ENCODE measurements at regions of chr1 and their contacts with region 1.

Region 1: GRCh38 chr1:2141036-2141435 is 53.5 kb downstream of the FAAP20 start:
- DNase-seq: no peak
- ATAC-seq: no peak
- H3K4me3 ChIP-seq: no peak overlapping the region
- H3K4me3 Mint-ChIP-seq: no peak overlapping the region
- H3K27ac ChIP-seq: no peak overlapping the region
- H3K27ac Mint-ChIP-seq: no peak overlapping the region
- H3K4me1 ChIP-seq: peaks cover 24% of the 10 kb centered on the region
- H3K4me1 Mint-ChIP-seq: peaks cover 38% of the 10 kb centered on the region
- H3K27me3 ChIP-seq: no peaks in the 10 kb centered on the region
- H3K27me3 Mint-ChIP-seq: no peaks in the 10 kb centered on the region
- CTCF ChIP-seq: no peak

Region 2: DNA sequence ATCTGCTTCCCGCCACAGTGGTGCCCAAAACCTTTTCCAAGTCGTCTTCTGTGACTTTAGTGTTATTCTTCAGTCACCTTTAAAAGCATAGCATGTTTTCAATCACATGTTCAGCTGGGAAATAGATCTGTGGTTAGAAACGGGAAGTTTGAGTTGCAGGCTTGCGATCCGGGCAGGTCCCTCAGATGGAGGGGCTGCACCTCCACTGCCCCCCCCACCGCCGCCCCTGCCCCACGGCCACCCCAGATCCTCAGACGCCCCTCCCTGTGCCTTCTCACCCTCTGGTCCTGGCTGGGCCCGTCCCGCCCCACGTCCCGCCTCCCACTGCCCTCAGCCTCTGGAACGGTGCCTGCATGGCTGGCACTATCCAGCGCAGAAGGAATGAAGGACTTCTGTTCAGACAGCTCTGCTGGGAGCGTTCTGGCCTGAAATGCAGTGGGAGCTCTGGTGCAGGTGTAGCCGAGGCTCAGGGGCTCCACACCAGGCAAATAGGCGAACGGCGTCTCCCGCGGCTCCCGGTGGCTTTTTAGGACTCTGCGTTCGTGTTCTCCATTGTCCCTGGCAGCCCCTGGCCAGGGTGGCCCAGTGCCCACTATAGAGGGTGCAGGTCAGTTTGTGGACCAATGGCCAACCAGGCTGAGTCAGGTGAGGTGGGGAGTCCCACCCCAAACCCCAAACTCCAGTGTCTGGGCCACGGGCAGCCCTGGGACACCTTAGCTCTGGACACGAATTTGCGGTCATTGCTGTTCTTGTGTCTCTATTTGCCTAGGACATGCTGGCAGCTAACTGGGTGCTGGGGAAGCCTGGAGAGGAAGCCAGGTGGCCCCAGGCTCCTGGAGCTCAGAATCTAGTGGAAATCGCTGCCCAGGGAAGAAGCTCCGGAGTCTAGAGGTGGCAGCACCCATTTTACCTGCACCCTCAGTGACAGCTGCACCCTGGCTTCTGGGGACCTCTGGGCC is 13.6 kb before region 1 on chr1:
- CTCF ChIA-PET with region 1: interaction called, 10 read pairs
- POLR2A ChIA-PET with region 1: no interaction called
- intact Hi-C with region 1: loop called in 1 of 2 experiments (anchors 2 kb)
- DNase-seq: no peak
- ATAC-seq: peak; percentile 26
- H3K4me3 ChIP-seq: no peak overlapping the region
- H3K4me3 Mint-ChIP-seq: peak overlapping the region; percentile 79
- H3K27ac ChIP-seq: no peak overlapping the region
- H3K27ac Mint-ChIP-seq: peak overlapping the region; percentile 88
- H3K4me1 ChIP-seq: peaks cover 26% of the 10 kb centered on the region
- H3K4me1 Mint-ChIP-seq: peaks cover 21% of the 10 kb centered on the region
- H3K27me3 ChIP-seq: no peaks in the 10 kb centered on the region
- H3K27me3 Mint-ChIP-seq: no peaks in the 10 kb centered on the region
- CTCF ChIP-seq: no peak

Region 3: DNA sequence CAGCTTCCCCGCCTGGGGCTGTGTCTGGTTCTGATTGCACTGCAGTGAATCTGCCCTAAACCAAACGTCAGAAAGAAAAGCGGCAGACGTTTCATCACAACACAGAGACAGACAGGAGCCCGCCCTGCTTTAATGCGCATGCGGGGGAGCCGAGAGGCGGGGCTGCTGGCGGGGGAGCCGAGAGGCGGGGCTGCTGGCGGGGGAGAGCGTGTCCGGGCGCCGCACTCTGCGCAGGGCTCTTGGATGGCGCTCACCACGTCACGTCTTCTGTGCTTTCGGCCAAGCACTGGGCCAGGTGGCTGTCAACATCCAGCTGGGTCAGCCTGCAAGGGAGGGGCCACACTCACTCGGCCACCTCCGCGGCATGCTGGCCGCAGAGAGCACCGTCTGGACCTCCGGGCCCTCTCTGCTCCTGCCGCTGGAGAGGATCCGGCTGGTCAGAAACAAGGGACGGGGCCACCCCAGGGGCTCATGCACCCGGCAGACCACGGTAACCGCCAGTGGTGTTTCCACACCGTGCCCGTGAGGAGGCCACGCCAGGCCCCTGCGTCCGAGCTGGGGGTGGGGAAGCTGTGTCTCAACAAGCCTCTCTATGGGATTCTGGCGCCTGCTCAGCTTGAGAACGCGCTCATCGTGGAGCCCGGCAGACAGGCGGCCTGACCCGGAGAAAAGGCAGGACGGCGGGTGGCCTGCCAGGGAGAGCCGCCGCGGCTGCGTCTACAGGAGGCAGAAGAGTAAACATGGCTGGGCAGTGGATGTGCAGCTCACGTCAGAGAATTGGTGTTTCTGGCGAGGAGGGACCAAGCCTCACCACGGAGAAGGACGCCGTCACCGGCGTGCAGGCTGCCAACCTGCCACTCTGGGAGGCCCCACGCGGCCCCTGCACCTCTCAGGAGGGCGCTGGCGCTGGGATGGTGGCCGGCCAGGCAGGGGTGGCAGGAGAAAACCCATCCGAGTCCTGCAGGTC is 48.7 kb after region 1 on chr1:
- CTCF ChIA-PET with region 1: interaction called, 11 read pairs
- POLR2A ChIA-PET with region 1: no interaction called
- intact Hi-C with region 1: no loop called
- DNase-seq: peak; percentile 83 to 94 (median 90)
- ATAC-seq: peak; percentile 93
- H3K4me3 ChIP-seq: peak overlapping the region; percentile 54 to 61
- H3K4me3 Mint-ChIP-seq: peak overlapping the region; percentile 80
- H3K27ac ChIP-seq: peak overlapping the region; percentile 70 to 77
- H3K27ac Mint-ChIP-seq: peak overlapping the region; percentile 98
- H3K4me1 ChIP-seq: peaks cover 16% of the 10 kb centered on the region
- H3K4me1 Mint-ChIP-seq: peaks cover 17% of the 10 kb centered on the region
- H3K27me3 ChIP-seq: no peaks in the 10 kb centered on the region
- H3K27me3 Mint-ChIP-seq: no peaks in the 10 kb centered on the region
- CTCF ChIP-seq: no peak